ENCODE measurements at regions of chr13 and their contacts with region 1.

Region 1: DNA sequence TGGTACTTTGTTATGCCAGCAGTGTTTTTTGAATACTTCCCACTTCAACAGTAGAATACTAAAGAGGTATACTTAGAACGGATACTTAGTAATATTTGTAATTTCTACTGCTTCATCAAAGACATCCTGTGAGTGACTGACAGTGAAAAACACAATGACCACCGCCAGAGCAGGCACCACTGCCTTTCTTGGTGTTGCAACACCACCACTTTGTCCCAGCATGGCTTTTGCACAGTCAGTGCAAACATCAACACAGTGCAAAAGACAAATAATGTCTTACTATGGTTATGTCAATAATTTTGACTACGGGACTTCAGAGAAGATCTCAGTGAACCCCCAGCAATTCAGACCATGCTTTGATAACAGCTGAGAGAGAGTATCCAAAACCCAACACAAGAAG is 220.5 kb downstream of the RBM26 start:
- DNase-seq: peak; percentile 80
- ATAC-seq: peak; percentile 100
- H3K4me3 ChIP-seq: no peak overlapping the region
- H3K27ac ChIP-seq: no peak overlapping the region
- H3K4me1 ChIP-seq: peaks cover 20% of the 10 kb centered on the region
- H3K27me3 ChIP-seq: no peaks in the 10 kb centered on the region
- CTCF ChIP-seq: 0 out of 2 replicates have a peak, but pooled peaks have one; percentile 10
- EP300 ChIP-seq: peak; percentile 16 to 81; a peak in 2 of 4 replicates
- POLR2A ChIP-seq: no peak
- RAD21 ChIP-seq: no peak

Region 2: DNA sequence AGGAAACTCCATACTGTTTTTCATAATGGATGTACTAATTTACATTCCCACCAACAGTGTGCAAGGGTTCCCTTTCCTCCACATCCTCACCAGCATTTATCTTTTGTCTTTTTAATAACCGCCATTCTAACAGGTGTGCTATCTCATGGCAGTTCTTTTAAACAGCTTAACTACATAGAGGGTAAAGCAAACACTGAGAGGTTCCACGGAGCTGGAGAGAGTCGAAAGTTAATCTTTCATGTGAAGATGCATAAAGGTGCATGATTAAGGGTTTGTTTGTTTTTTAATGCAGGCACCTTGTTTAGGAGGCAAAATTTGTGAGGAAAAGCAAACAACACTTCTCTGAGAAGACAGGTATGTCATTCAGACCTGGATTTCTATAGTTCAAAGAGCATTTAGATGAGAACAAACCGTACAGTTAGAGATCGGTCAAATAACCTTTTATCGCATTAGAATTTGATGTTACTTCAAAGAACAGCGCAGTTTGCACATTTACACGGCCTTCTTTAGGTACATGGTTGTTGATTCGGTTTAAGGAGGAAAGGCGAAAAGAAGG is 26.6 kb after region 1 on chr13:
- CTCF ChIA-PET with region 1: no interaction called
- POLR2A ChIA-PET with region 1: no interaction called
- in situ Hi-C with region 1: no loop called
- intact Hi-C with region 1: loop called (anchors 2 kb)
- DNase-seq: peak; percentile 69
- ATAC-seq: peak; percentile 94
- H3K4me3 ChIP-seq: no peak overlapping the region; a peak in 1 of 6 replicates
- H3K27ac ChIP-seq: peak overlapping the region; percentile 18
- H3K4me1 ChIP-seq: peaks cover 17% of the 10 kb centered on the region
- H3K27me3 ChIP-seq: no peaks in the 10 kb centered on the region
- CTCF ChIP-seq: no peak
- EP300 ChIP-seq: peak in 1 of 2 experiments; percentile 47; a peak in 1 of 4 replicates
- POLR2A ChIP-seq: no peak
- RAD21 ChIP-seq: no peak